Heart left ventricle (tissue), 16 donors: ENCODE measurements at regions of chr6 and their contacts with region 1.

Region 1: DNA sequence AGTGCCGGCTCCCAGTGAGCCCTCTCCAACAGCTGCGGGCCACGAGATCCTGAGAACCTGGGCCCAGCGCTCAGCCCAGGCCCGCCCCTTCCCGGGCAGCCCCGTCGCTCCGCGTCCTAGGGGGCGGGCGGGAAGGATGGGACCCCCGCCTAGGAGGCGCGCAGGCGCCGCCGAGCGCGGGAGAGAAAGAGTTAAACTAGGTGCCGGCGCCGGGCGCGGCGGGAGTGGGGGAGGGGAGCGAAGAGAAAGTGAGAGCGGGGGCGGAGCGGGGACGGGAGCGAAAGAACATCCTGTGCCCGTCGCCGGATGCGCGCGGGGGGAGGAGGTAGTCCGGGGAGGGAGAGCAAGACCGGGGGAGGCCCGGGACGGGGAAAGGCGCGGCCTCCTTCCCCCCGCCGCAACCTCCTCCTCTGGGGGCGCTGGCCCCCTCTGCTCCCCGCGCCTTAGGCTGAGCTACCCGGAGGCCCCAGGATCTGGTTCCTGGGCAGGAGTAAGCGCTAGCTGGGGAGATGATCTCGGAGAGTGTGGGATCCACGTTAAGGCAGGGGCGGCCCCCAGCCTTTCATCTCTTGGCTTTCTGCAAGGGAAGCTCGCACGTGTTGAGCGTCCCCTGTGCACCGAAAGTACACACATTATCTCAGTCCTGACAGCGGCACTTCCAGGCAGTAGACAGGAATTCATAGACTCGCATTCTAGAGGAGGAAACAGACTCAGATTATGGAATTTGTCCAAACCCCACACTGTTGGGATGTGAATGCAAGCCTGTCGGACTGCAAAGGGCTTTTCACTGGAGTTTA is 4.9 kb upstream of the ARMC12 start:
- DNase-seq: peak; percentile 96 to 99 (median 97)
- ATAC-seq: peak; percentile 57 to 80 (median 76)
- H3K4me3 ChIP-seq: peak overlapping the region; percentile 56 to 98 (median 73)
- H3K27ac ChIP-seq: peak overlapping the region; percentile 96 to 100 (median 100)
- H3K4me1 ChIP-seq: peaks cover 21 to 83% (median 41%) of the 10 kb centered on the region in 12 donors
- H3K27me3 ChIP-seq: no peaks in the 10 kb centered on the region
- CTCF ChIP-seq: peak in 5 of 12 donors; percentile 8 to 31 (median 25)
- POLR2A ChIP-seq: peak in 1 of 2 donors; percentile 39

Region 2: DNA sequence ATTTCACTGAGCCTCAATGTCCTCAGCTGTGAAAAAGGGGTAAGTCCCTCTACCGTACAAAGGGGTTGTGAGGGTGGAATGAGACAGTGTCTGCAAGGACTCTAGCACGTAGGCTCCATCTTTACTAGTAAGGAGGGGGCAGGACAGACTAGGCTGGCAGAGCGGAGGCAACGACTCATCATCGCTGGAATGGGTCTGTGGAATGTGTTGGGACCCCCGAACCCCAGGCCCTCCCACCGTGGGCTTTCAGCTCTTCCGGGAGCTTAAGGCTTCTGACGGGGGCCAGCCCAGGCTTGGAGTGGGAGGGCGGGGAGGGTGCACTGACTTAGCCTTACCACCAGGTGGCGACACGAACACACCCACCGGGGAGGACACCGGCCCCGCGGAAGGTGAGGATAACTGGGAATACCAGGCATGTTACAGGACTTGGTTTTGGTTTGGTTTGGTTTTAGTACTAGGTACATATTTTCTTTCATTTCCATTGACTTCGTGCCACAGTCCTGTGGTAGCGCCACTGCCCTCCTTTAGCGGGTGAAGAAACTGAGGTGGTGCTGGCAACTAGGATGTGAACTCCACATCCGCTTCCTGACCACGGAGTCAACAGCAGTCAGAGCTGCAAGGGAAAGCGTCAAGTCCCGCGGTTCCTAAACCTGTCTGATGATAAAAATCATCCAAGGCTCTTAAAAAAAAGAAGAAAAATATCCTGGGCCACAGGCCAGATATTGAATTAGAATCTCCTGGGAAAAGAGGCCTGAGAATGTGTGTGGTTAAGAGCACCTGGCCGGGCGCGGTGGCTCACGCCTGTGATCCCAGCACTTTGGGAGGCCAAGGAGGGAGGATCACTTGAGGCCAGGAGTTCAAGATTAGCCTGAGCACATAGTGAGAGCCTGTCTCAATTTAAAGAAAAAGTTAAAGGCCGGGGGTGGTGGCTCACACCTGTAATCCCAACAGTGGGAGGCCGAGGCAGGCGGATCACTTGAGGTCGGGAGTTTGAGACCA is 209.0 kb before region 1 on chr6:
- intact Hi-C with region 1: loop called (anchors 1 to 5 kb)
- DNase-seq: peak; percentile 54 to 84 (median 73)
- ATAC-seq: peak; percentile 73 to 95 (median 92)
- H3K4me3 ChIP-seq: peak overlapping the region in 9 of 12 donors; percentile 10 to 45 (median 28)
- H3K27ac ChIP-seq: no peak overlapping the region
- H3K4me1 ChIP-seq: peaks cover 0 to 12% (median 0%) of the 10 kb centered on the region in 12 donors
- H3K27me3 ChIP-seq: peaks cover 0 to 3% (median 0%) of the 10 kb centered on the region in 9 donors
- CTCF ChIP-seq: peak; percentile 92 to 100 (median 97)
- POLR2A ChIP-seq: no peak

Region 3: GRCh38 chr6:35601331-35602132 is 130.4 kb before region 1 on chr6:
- intact Hi-C with region 1: loop called in 5 of 10 experiments (anchors 1 to 5 kb)
- DNase-seq: peak in 4 of 5 donors; percentile 17 to 74 (median 43)
- ATAC-seq: peak; percentile 88 to 91 (median 90)
- H3K4me3 ChIP-seq: peak overlapping the region in 10 of 12 donors; percentile 5 to 46 (median 27)
- H3K27ac ChIP-seq: peak overlapping the region; percentile 84 to 100 (median 94)
- H3K4me1 ChIP-seq: peaks cover 29 to 100% (median 45%) of the 10 kb centered on the region in 12 donors
- H3K27me3 ChIP-seq: no peaks in the 10 kb centered on the region
- CTCF ChIP-seq: no peak
- POLR2A ChIP-seq: no peak

Region 4: GRCh38 chr6:35634316-35634715 is 97.6 kb before region 1 on chr6:
- intact Hi-C with region 1: loop called in 1 of 10 experiments (anchors 2 kb)
- DNase-seq: peak in 4 of 5 donors; percentile 25 to 58 (median 34)
- ATAC-seq: peak; percentile 20 to 73 (median 68)
- H3K4me3 ChIP-seq: no peak overlapping the region
- H3K27ac ChIP-seq: peak overlapping the region in 5 of 12 donors; percentile 2 to 23 (median 18)
- H3K4me1 ChIP-seq: peaks cover 0 to 16% (median 7%) of the 10 kb centered on the region in 12 donors
- H3K27me3 ChIP-seq: no peaks in the 10 kb centered on the region
- CTCF ChIP-seq: no peak
- POLR2A ChIP-seq: no peak

Region 5: DNA sequence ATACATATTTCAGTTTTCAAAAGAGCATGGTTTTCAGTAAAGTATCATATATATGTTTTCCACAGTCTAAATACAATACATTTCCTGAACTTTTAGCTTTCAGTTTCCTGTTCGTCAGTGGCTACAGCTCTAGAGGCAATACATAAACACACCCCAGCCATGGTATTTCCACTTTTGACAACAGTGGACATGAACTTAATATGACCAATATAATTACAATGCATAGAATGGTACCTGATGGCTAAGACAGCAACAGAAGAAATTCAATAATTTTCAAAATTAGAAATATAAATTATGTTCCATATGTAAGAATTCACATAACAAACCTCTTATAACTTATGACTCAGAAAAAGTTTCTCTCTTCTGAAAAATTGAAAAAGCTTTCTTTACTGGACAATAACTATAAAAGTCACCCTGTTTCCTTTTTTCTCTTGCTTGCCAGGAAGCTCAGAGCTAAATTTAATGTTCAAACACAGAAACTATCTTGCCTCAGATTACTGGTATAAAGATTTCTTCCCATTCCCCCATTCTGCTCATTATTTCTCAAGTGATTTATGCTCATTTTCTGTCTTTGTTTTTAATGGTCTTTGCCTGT is 62.4 kb before region 1 on chr6:
- intact Hi-C with region 1: loop called in 1 of 10 experiments (anchors 5 kb)
- DNase-seq: no peak
- ATAC-seq: peak in 1 of 4 donors; percentile 67
- H3K4me3 ChIP-seq: peak overlapping the region in 6 of 12 donors; percentile 6 to 37 (median 18)
- H3K27ac ChIP-seq: peak overlapping the region in 6 of 12 donors; percentile 4 to 76 (median 36)
- H3K4me1 ChIP-seq: peaks cover 0 to 97% (median 23%) of the 10 kb centered on the region in 12 donors
- H3K27me3 ChIP-seq: no peaks in the 10 kb centered on the region
- CTCF ChIP-seq: no peak
- POLR2A ChIP-seq: no peak

Region 6: GRCh38 chr6:35688581-35689322 is 43.2 kb before region 1 on chr6 and contains the start of gene FKBP5:
- intact Hi-C with region 1: loop called in 9 of 10 experiments (anchors 2 to 5 kb)
- DNase-seq: peak; percentile 97 to 98 (median 98)
- ATAC-seq: peak; percentile 85 to 96 (median 94)
- H3K4me3 ChIP-seq: peak within 1 kb of the TSS; percentile 83 to 100 (median 91)
- H3K27ac ChIP-seq: peak within 1 kb of the TSS; percentile 85 to 99 (median 94)
- H3K4me1 ChIP-seq: peaks cover 0 to 67% (median 22%) of the 10 kb centered on the region in 12 donors
- H3K27me3 ChIP-seq: no peaks in the 10 kb centered on the region
- CTCF ChIP-seq: no peak
- POLR2A ChIP-seq: peak; percentile 99
- total RNA-seq, gene FKBP5: 19.7 to 175 (median 104) TPM

Region 7: DNA sequence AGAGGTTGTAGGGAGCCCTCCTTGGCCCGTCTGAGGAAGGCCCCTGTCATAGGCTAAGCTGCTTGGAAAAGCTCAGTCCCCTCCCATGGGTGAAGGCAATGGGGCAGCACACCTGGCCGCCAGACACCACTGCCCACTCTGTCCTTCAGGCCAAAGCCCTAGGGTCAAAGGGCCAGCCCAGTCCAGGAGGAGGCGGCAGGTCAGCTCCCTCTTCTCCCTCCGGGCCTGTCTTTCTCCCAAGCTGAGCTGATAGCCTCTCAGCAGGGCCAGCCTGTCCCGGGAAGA is 39.4 kb after region 1 on chr6:
- intact Hi-C with region 1: no loop called
- DNase-seq: no peak
- ATAC-seq: no peak
- H3K4me3 ChIP-seq: no peak overlapping the region
- H3K27ac ChIP-seq: no peak overlapping the region
- H3K4me1 ChIP-seq: peaks cover 0 to 4% (median under 1%) of the 10 kb centered on the region in 12 donors
- H3K27me3 ChIP-seq: peaks cover 0 to 27% (median 7%) of the 10 kb centered on the region in 9 donors
- CTCF ChIP-seq: no peak
- POLR2A ChIP-seq: no peak

Region 8: GRCh38 chr6:35993150-35993549 is 261.2 kb after region 1 on chr6:
- intact Hi-C with region 1: no loop called
- DNase-seq: no peak
- ATAC-seq: no peak
- H3K4me3 ChIP-seq: no peak overlapping the region
- H3K27ac ChIP-seq: no peak overlapping the region
- H3K4me1 ChIP-seq: no peaks in the 10 kb centered on the region
- H3K27me3 ChIP-seq: peaks cover 0 to 4% (median 0%) of the 10 kb centered on the region in 9 donors
- CTCF ChIP-seq: no peak
- POLR2A ChIP-seq: no peak